Heart right ventricle (tissue), 16 donors: ENCODE measurements at regions of chr14 and their contacts with region 1.

Region 1: GRCh38 chr14:102898776-102899515 is 23.5 kb upstream of the AMN start:
- DNase-seq: no peak
- ATAC-seq: no peak
- H3K4me3 ChIP-seq: no peak overlapping the region
- H3K27ac ChIP-seq: no peak overlapping the region
- H3K4me1 ChIP-seq: peaks cover 0 to 12% (median 0%) of the 10 kb centered on the region in 9 donors
- H3K27me3 ChIP-seq: no peaks in the 10 kb centered on the region
- CTCF ChIP-seq: no peak

Region 2: DNA sequence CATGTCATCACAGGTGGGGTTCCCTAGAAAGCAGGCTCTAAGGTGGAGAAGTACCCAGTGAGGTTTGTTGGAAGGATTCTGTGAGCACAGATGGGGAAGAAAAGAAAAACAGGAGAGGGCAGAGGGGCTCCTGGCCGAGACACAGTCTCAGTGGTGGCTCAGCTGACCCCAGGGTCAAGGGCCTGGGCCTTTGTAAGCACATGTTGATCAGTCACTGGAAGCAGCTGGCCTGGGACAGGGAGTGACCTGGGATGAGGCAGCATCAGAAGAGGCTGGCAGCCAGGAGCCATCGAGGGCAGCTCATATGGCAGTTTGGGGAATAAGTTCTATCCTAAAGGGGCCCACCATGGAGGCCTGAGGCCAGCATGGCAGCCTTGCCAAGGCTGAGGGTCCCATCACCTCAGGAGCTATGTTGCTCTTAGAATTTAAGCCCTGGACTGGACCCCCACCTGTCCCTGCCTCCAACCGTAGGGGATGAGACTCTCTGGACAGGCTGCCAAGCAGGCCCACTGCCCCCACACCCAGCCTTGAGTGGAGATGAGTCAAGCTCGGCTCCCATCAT is 1711.9 kb after region 1 on chr14:
- intact Hi-C with region 1: loop called in 1 of 10 experiments (anchors 5 kb)
- DNase-seq: no peak
- ATAC-seq: peak in 1 of 8 donors; percentile 38
- H3K4me3 ChIP-seq: no peak overlapping the region
- H3K27ac ChIP-seq: no peak overlapping the region
- H3K4me1 ChIP-seq: no peaks in the 10 kb centered on the region
- H3K27me3 ChIP-seq: peaks cover 0 to 36% (median 19%) of the 10 kb centered on the region in 7 donors
- CTCF ChIP-seq: no peak